ENCODE measurements at regions of chr9 and their contacts with region 1.

Region 1: GRCh38 chr9:19441730-19442129 is 32.9 kb downstream of the ACER2 start:
- DNase-seq: no peak
- H3K4me3 Mint-ChIP-seq: peak overlapping the region; percentile 48
- H3K27ac Mint-ChIP-seq: peak overlapping the region; percentile 80
- H3K4me1 Mint-ChIP-seq: peaks cover 14% of the 10 kb centered on the region
- H3K27me3 Mint-ChIP-seq: no peaks in the 10 kb centered on the region

Region 2: GRCh38 chr9:19379697-19380046 is 62.1 kb before region 1 on chr9:
- intact Hi-C with region 1: loop called (anchors 1 kb)
- DNase-seq: no peak
- H3K4me3 Mint-ChIP-seq: peak overlapping the region; percentile 98
- H3K27ac Mint-ChIP-seq: peak overlapping the region; percentile 98
- H3K4me1 Mint-ChIP-seq: peaks cover 61% of the 10 kb centered on the region
- H3K27me3 Mint-ChIP-seq: no peaks in the 10 kb centered on the region

Measured in activated T-helper 1 cell treated with anti-CD3 and anti-CD28 coated beads, Interleukin-12 subunit alpha, Interleukin-12 subunit beta, Interleukin-2, Interleukin-4 antibody, amounts not matched to agents 30 ng/mL and 10 ng/mL and 1 ng/mL, durations not matched to agents 14 hours and 24 hours and 36 hours (primary cell).